Ovary (tissue), 10 donors: ENCODE measurements at regions of chr13 and their contacts with region 1.

Region 1: GRCh38 chr13:51058461-51059167 is 52.5 kb downstream of the C13orf42 start:
- DNase-seq: no peak
- H3K4me3 ChIP-seq: no peak overlapping the region
- H3K27ac ChIP-seq: no peak overlapping the region
- H3K4me1 ChIP-seq: no peaks in the 10 kb centered on the region
- H3K27me3 ChIP-seq: no peaks in the 10 kb centered on the region
- CTCF ChIP-seq: no peak
- EP300 ChIP-seq: no peak
- POLR2A ChIP-seq: no peak

Region 2: GRCh38 chr13:50866817-50867636 is 191.6 kb before region 1 on chr13:
- intact Hi-C with region 1: loop called in 1 of 4 experiments (anchors 10 kb)
- DNase-seq: no peak
- H3K4me3 ChIP-seq: no peak overlapping the region
- H3K27ac ChIP-seq: no peak overlapping the region
- H3K4me1 ChIP-seq: no peaks in the 10 kb centered on the region
- H3K27me3 ChIP-seq: no peaks in the 10 kb centered on the region
- CTCF ChIP-seq: no peak
- EP300 ChIP-seq: no peak
- POLR2A ChIP-seq: no peak

Region 3: GRCh38 chr13:50882816-50883435 is 175.7 kb before region 1 on chr13:
- intact Hi-C with region 1: no loop called
- DNase-seq: no peak
- H3K4me3 ChIP-seq: no peak overlapping the region
- H3K27ac ChIP-seq: no peak overlapping the region
- H3K4me1 ChIP-seq: no peaks in the 10 kb centered on the region
- H3K27me3 ChIP-seq: no peaks in the 10 kb centered on the region
- CTCF ChIP-seq: no peak
- EP300 ChIP-seq: no peak
- POLR2A ChIP-seq: no peak